ENCODE measurements at regions of chr10 and their contacts with region 1.

Region 1: GRCh38 chr10:30553625-30554439 is 75.7 kb downstream of the LYZL2 start:
- DNase-seq: no peak
- ATAC-seq: no peak
- H3K4me3 Mint-ChIP-seq: no peak overlapping the region
- H3K27ac Mint-ChIP-seq: no peak overlapping the region
- H3K4me1 Mint-ChIP-seq: peaks cover 2% of the 10 kb centered on the region
- H3K27me3 Mint-ChIP-seq: no peaks in the 10 kb centered on the region

Region 2: DNA sequence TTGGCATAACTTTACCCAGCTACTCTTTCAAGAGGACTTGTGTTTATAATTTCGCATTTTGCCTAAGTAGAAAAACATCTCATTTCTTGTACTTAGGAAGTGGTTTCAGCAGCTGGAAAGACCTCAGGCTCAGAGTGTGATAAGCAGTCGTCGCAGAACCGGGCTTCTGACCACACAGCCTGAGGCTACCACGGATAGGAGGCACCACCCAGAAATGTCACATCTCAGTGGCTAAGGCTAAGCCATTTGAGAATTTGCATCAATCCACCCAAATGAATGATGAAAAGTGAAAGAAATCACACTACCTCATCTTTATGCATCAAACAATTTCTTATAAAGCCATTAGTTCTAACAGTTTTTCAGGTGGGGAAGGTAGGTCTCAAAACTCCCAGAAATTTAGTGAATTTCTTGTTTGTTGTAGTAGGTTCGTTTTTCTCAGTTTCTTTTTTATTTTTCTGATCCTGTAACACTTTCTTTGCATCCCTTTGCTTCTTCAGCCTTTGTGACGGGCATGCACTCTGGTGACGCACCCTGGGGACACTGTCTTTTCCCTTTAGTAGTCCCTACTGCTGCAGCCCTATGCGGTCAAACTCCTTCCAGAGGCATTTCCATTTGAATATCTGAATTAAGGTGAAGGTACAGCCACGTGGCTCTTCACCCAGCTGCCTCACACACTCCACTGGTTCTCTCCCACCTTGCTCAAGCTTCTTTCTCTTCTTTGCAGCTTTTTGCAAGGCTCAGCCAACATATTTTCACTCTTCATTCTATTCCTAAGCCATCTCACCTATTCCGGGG is 51.4 kb before region 1 on chr10:
- CTCF ChIA-PET with region 1: no interaction called
- POLR2A ChIA-PET with region 1: no interaction called
- intact Hi-C with region 1: loop called in 1 of 2 experiments (anchors 5 kb)
- DNase-seq: peak; percentile 48
- ATAC-seq: peak; percentile 84
- H3K4me3 Mint-ChIP-seq: no peak overlapping the region
- H3K27ac Mint-ChIP-seq: no peak overlapping the region
- H3K4me1 Mint-ChIP-seq: peaks cover 31% of the 10 kb centered on the region
- H3K27me3 Mint-ChIP-seq: peaks cover 5% of the 10 kb centered on the region